ENCODE measurements at regions of chr10 and their contacts with region 1.

Region 1: DNA sequence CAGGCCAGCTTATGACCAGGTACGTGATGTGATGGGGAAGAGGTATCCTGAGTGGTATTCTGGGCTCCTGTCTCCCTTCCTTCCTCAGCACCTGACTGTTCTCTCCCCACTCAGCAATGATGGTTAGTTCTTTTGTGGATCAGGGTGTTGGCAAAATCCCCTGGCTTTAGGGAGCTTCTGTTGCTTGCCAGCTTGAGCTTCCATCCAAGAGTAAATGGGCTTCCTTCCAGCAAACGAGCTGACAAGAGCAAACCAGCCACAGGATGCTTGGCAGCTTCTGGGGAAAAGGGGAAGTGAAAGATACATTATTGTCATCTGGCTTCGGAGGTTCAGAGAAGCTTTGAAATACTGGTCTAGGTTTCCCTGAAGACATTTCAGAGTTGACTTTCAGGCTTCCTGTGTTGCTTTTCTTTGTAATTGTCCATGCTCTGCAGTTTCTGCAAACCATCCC is 5.2 kb downstream of the DUSP5 start:
- DNase-seq: peak; percentile 58
- H3K4me3 Mint-ChIP-seq: peak overlapping the region; percentile 96
- H3K27ac Mint-ChIP-seq: peak overlapping the region; percentile 97
- H3K4me1 Mint-ChIP-seq: peaks cover 78% of the 10 kb centered on the region
- H3K27me3 Mint-ChIP-seq: no peaks in the 10 kb centered on the region

Region 2: GRCh38 chr10:110457851-110458250 is 45.0 kb before region 1 on chr10:
- CTCF ChIA-PET with region 1: no interaction called
- POLR2A ChIA-PET with region 1: no interaction called
- intact Hi-C with region 1: no loop called
- DNase-seq: no peak
- H3K4me3 Mint-ChIP-seq: no peak overlapping the region
- H3K27ac Mint-ChIP-seq: no peak overlapping the region
- H3K4me1 Mint-ChIP-seq: peaks cover 56% of the 10 kb centered on the region
- H3K27me3 Mint-ChIP-seq: no peaks in the 10 kb centered on the region

Region 3: GRCh38 chr10:110487411-110488123 is 15.3 kb before region 1 on chr10:
- CTCF ChIA-PET with region 1: no interaction called
- POLR2A ChIA-PET with region 1: no interaction called
- intact Hi-C with region 1: no loop called
- DNase-seq: no peak
- H3K4me3 Mint-ChIP-seq: no peak overlapping the region
- H3K27ac Mint-ChIP-seq: no peak overlapping the region
- H3K4me1 Mint-ChIP-seq: peaks cover 18% of the 10 kb centered on the region
- H3K27me3 Mint-ChIP-seq: no peaks in the 10 kb centered on the region

Region 4: GRCh38 chr10:110528224-110528997 is 25.5 kb after region 1 on chr10:
- CTCF ChIA-PET with region 1: interaction called, 3 read pairs
- POLR2A ChIA-PET with region 1: interaction called, 11 read pairs
- intact Hi-C with region 1: loop called (anchors 1 kb)
- DNase-seq: peak; percentile 25
- H3K4me3 Mint-ChIP-seq: no peak overlapping the region
- H3K27ac Mint-ChIP-seq: peak overlapping the region; percentile 85
- H3K4me1 Mint-ChIP-seq: peaks cover 66% of the 10 kb centered on the region
- H3K27me3 Mint-ChIP-seq: no peaks in the 10 kb centered on the region

Measured in activated CD4-positive, alpha-beta memory T cell treated with anti-CD3 and anti-CD28 coated beads for 36 hours (primary cell).